Activated naive CD4-positive, alpha-beta T cell treated with anti-CD3 and anti-CD28 coated beads, Interleukin-2, amount 10 ng/mL, durations not matched to agents 7 days and 5 days (primary cell): ENCODE measurements at regions of chr12 and their contacts with region 1.

Region 1: GRCh38 chr12:3885277-3886094 is 12.3 kb upstream of the PARP11 start:
- DNase-seq: peak; percentile 51
- H3K4me3 Mint-ChIP-seq: no peak overlapping the region
- H3K27ac Mint-ChIP-seq: no peak overlapping the region
- H3K4me1 Mint-ChIP-seq: peaks cover 14% of the 10 kb centered on the region
- H3K27me3 Mint-ChIP-seq: peaks cover 17% of the 10 kb centered on the region

Region 2: GRCh38 chr12:3896801-3897331 is 11.4 kb after region 1 on chr12:
- CTCF ChIA-PET with region 1: interaction called, 20 read pairs
- DNase-seq: no peak
- H3K4me3 Mint-ChIP-seq: peak overlapping the region; percentile 31
- H3K27ac Mint-ChIP-seq: peak overlapping the region; percentile 96
- H3K4me1 Mint-ChIP-seq: peaks cover 42% of the 10 kb centered on the region
- H3K27me3 Mint-ChIP-seq: no peaks in the 10 kb centered on the region

Region 3: GRCh38 chr12:3964439-3964838 is 79.0 kb after region 1 on chr12:
- CTCF ChIA-PET with region 1: interaction called, 163 read pairs
- DNase-seq: no peak
- H3K4me3 Mint-ChIP-seq: no peak overlapping the region
- H3K27ac Mint-ChIP-seq: no peak overlapping the region
- H3K4me1 Mint-ChIP-seq: peaks cover 21% of the 10 kb centered on the region
- H3K27me3 Mint-ChIP-seq: peaks cover 10% of the 10 kb centered on the region

Region 4: DNA sequence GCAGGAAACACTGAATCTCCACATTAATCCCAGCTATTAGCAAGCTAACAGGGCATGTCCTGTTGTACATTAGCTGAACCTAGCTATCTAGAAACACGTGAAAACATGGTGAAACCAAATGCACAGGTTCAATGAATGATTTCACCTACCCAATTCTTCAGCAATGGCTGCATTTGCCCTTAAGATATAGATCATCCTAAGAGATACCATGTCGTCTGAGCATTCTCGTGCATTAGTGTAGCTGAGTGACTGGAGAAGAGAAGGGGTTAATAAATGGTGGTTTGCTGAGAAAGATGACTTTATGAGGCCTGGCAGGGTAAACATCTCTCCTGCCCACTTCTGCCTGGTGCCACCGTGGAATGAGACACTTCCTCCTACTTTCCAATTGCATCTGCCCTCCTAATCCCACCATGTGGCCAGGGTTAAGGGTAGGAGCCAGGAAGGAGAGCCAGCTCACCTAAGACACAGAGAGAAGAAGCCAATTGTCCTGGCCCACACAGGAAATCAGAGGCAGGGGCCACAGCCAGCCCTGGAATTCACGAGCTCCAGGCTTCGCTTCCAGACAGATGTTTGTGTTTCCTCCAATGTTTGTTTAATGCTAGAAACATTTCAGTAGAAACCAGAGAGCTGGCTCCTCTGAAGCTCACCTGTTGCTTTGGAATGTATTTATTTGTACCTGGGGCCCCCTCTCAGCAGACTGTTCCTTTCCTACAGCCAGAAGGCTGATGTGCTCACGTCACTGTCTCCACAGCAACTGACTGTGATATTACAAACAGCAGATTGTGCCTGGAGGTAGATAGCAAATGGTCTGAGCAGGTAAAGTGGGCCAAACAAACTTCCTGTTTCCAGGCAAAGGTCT is 113.7 kb after region 1 on chr12:
- CTCF ChIA-PET with region 1: interaction called, 111 read pairs
- DNase-seq: no peak
- H3K4me3 Mint-ChIP-seq: no peak overlapping the region
- H3K27ac Mint-ChIP-seq: no peak overlapping the region
- H3K4me1 Mint-ChIP-seq: peaks cover 20% of the 10 kb centered on the region
- H3K27me3 Mint-ChIP-seq: peaks cover 16% of the 10 kb centered on the region

Region 5: DNA sequence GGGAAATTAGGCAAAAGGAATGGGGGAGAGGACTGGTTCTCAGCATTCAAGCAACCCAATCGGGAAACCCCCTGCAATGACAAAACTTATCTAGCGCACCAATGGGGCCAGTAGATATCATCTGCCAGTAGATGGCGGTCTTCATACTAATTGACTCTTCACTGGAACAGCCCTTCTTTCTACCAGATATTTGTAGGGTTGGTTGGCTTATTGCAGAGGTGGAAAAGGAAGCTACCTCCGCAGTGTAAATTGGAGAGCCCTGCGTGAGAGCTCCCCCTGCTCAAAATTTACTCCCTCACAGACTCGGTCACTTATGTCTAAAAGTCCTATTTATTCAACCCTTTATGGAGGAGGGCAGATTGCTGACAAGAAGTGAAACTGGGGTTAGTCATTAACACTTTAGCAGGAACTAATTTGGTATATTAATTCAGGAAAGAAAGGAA is 222.0 kb after region 1 on chr12:
- CTCF ChIA-PET with region 1: interaction called, 13 read pairs
- DNase-seq: peak; percentile 83
- H3K4me3 Mint-ChIP-seq: no peak overlapping the region
- H3K27ac Mint-ChIP-seq: peak overlapping the region; percentile 78
- H3K4me1 Mint-ChIP-seq: peaks cover 53% of the 10 kb centered on the region
- H3K27me3 Mint-ChIP-seq: peaks cover 4% of the 10 kb centered on the region

Region 6: DNA sequence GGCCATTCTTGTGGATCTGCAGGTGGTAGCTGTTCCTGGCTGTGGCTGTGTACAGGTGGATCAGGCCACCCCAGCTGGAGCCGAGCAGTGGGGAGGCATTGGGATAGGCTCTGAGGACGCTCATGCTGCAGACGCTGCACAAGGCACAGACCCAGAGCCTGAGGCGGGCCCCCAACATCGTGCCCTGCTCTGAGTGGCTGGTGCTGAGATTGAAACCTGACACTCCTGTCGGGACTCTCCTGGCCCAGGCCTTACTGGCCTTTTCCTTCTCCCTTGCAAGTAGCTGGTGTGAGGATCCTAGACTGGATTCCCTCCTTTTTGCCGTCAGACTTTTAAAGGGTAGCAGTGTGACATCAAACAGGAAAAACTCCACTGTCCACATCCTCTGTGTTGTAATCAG is 493.9 kb after region 1 on chr12 and contains the start of gene FGF23:
- CTCF ChIA-PET with region 1: no interaction called
- DNase-seq: no peak
- H3K4me3 Mint-ChIP-seq: no peak within 1 kb of the TSS
- H3K27ac Mint-ChIP-seq: no peak within 1 kb of the TSS
- H3K4me1 Mint-ChIP-seq: no peaks in the 10 kb centered on the region
- H3K27me3 Mint-ChIP-seq: peaks cover 40% of the 10 kb centered on the region